ENCODE measurements at regions of chr14 and their contacts with region 1.

Region 1: DNA sequence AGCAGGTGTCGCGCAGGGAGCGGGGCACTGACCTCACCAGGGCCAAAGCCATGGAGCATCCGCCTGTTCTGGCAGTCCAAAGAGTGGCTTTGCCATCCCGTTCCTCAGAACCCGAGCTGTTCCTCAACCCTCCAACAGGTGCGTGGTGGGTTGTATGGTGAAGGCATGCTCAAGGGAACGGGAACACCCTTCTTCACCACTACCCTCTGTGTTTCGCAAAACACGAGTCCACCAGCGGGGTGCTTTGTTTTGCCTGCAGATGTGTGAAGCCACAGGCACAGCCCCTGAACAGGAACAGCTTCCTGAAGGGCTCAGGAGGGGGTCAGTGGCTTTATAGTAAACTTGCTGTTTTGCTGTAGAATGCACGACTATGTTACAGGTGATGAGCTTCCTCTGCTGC is 52.7 kb downstream of the SMOC1 start:
- DNase-seq: no peak
- H3K4me3 ChIP-seq: no peak overlapping the region
- H3K27ac ChIP-seq: no peak overlapping the region
- H3K4me1 ChIP-seq: peaks cover 0 to 7% (median 2%) of the 10 kb centered on the region in 4 experiments; a peak in 4 of 7 replicates
- H3K27me3 ChIP-seq: no peaks in the 10 kb centered on the region
- CTCF ChIP-seq: peak; percentile 22 to 54 (median 41); a peak in 3 of 4 replicates
- EP300 ChIP-seq: no peak
- POLR2A ChIP-seq: no peak
- RAD21 ChIP-seq: no peak

Region 2: DNA sequence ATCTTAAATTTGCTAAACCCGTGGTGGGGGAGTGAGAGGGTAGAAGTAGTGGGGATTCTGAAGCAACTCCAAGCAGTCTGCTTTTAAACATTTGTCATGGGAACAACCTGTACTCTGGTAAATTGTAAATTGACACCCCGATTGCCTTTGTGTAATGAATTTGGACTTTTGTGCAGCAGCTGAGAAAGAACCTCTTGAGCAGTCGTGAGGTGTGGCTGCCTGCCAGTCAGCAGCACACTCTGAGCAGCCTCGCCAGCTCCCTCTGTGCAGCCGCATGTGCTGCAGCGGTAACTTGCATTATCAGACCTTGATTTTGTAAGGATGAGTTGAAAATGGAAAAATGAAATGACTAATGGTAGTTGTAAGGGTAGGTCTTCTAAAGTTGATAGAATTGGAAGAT is 246.2 kb before region 1 on chr14:
- CTCF ChIA-PET with region 1: no interaction called
- POLR2A ChIA-PET with region 1: no interaction called
- DNase-seq: no peak
- H3K4me3 ChIP-seq: no peak overlapping the region
- H3K27ac ChIP-seq: no peak overlapping the region
- H3K4me1 ChIP-seq: no peaks in the 10 kb centered on the region; a peak in 1 of 7 replicates
- H3K27me3 ChIP-seq: no peaks in the 10 kb centered on the region
- CTCF ChIP-seq: no peak
- EP300 ChIP-seq: no peak
- POLR2A ChIP-seq: no peak
- RAD21 ChIP-seq: no peak

Region 3: GRCh38 chr14:69696633-69697557 is 235.1 kb before region 1 on chr14:
- CTCF ChIA-PET with region 1: no interaction called
- POLR2A ChIA-PET with region 1: no interaction called
- DNase-seq: no peak
- H3K4me3 ChIP-seq: no peak overlapping the region
- H3K27ac ChIP-seq: no peak overlapping the region
- H3K4me1 ChIP-seq: peaks cover 5 to 25% (median 12%) of the 10 kb centered on the region in 4 experiments; a peak in 4 of 7 replicates
- H3K27me3 ChIP-seq: no peaks in the 10 kb centered on the region
- CTCF ChIP-seq: no peak
- EP300 ChIP-seq: no peak
- POLR2A ChIP-seq: no peak
- RAD21 ChIP-seq: no peak

Region 4: GRCh38 chr14:69917287-69917686 is 14.7 kb before region 1 on chr14:
- CTCF ChIA-PET with region 1: interaction called, 15 read pairs
- POLR2A ChIA-PET with region 1: no interaction called
- DNase-seq: no peak
- H3K4me3 ChIP-seq: no peak overlapping the region
- H3K27ac ChIP-seq: no peak overlapping the region
- H3K4me1 ChIP-seq: no peaks in the 10 kb centered on the region
- H3K27me3 ChIP-seq: no peaks in the 10 kb centered on the region; a peak in 1 of 7 replicates
- CTCF ChIP-seq: no peak
- EP300 ChIP-seq: no peak
- POLR2A ChIP-seq: no peak
- RAD21 ChIP-seq: no peak

Region 5: DNA sequence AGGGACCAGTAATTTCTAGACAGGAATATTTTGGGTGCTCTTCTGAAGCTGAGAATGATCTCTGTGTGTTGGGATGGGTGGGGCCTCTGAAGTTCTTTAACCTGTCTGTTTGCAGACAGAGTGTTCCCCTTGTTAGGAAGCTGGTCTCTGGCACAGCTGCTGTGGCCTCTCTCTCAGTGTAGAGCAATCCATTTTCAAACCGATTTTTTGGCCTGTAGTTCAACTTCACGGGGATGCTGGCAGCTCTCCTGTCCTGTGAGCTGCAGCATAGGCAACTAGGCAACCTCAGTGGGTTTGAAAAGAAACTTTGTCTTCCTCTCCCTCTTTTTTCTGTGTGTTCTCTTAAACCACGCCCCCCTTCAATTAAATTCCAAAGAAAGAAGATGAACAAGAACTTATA is 16.4 kb after region 1 on chr14:
- CTCF ChIA-PET with region 1: interaction called, 13 read pairs
- POLR2A ChIA-PET with region 1: no interaction called
- DNase-seq: no peak
- H3K4me3 ChIP-seq: no peak overlapping the region
- H3K27ac ChIP-seq: no peak overlapping the region
- H3K4me1 ChIP-seq: no peaks in the 10 kb centered on the region; a peak in 1 of 7 replicates
- H3K27me3 ChIP-seq: no peaks in the 10 kb centered on the region; a peak in 1 of 7 replicates
- CTCF ChIP-seq: no peak
- EP300 ChIP-seq: no peak
- POLR2A ChIP-seq: no peak
- RAD21 ChIP-seq: no peak

Region 6: GRCh38 chr14:69953266-69953915 is 21.4 kb after region 1 on chr14:
- CTCF ChIA-PET with region 1: interaction called, 13 read pairs
- POLR2A ChIA-PET with region 1: no interaction called
- DNase-seq: no peak
- H3K4me3 ChIP-seq: no peak overlapping the region
- H3K27ac ChIP-seq: no peak overlapping the region
- H3K4me1 ChIP-seq: no peaks in the 10 kb centered on the region; a peak in 1 of 7 replicates
- H3K27me3 ChIP-seq: no peaks in the 10 kb centered on the region
- CTCF ChIP-seq: no peak
- EP300 ChIP-seq: no peak
- POLR2A ChIP-seq: no peak
- RAD21 ChIP-seq: no peak